ENCODE measurements at regions of chr10 and their contacts with region 1.

Region 1: GRCh38 chr10:114374053-114374791 is 30.1 kb downstream of the AFAP1L2 start:
- DNase-seq: no peak
- ATAC-seq: peak; percentile 20; the same call in 1 of the 2 replicates
- H3K4me3 Mint-ChIP-seq: no peak overlapping the region
- H3K27ac Mint-ChIP-seq: peak overlapping the region; percentile 10; the same call in 1 of the 2 replicates
- H3K4me1 Mint-ChIP-seq: peaks cover 15% of the 10 kb centered on the region
- H3K27me3 Mint-ChIP-seq: no peaks in the 10 kb centered on the region
- CTCF ChIP-seq: no peak

Region 2: GRCh38 chr10:114356751-114357514 is 17.3 kb before region 1 on chr10:
- CTCF ChIA-PET with region 1: no interaction called
- POLR2A ChIA-PET with region 1: no interaction called
- DNase-seq: no peak
- ATAC-seq: no peak
- H3K4me3 Mint-ChIP-seq: no peak overlapping the region
- H3K27ac Mint-ChIP-seq: no peak overlapping the region
- H3K4me1 Mint-ChIP-seq: peaks cover 33% of the 10 kb centered on the region
- H3K27me3 Mint-ChIP-seq: no peaks in the 10 kb centered on the region
- CTCF ChIP-seq: no peak

Region 3: GRCh38 chr10:114388275-114388674 is 14.1 kb after region 1 on chr10:
- CTCF ChIA-PET with region 1: interaction called, 12 read pairs
- POLR2A ChIA-PET with region 1: no interaction called
- DNase-seq: no peak
- ATAC-seq: no peak
- H3K4me3 Mint-ChIP-seq: no peak overlapping the region
- H3K27ac Mint-ChIP-seq: no peak overlapping the region
- H3K4me1 Mint-ChIP-seq: peaks cover 9% of the 10 kb centered on the region
- H3K27me3 Mint-ChIP-seq: no peaks in the 10 kb centered on the region
- CTCF ChIP-seq: no peak

Region 4: GRCh38 chr10:114458955-114459354 is 84.7 kb after region 1 on chr10:
- CTCF ChIA-PET with region 1: interaction called, 12 read pairs
- POLR2A ChIA-PET with region 1: no interaction called
- DNase-seq: peak; percentile 78
- ATAC-seq: peak; percentile 99
- H3K4me3 Mint-ChIP-seq: no peak overlapping the region
- H3K27ac Mint-ChIP-seq: no peak overlapping the region
- H3K4me1 Mint-ChIP-seq: no peaks in the 10 kb centered on the region
- H3K27me3 Mint-ChIP-seq: no peaks in the 10 kb centered on the region
- CTCF ChIP-seq: peak; percentile 71